ENCODE measurements at regions of chr13 and their contacts with region 1.

Region 1: GRCh38 chr13:48731957-48732569 is 78.3 kb downstream of the CYSLTR2 start:
- DNase-seq: peak; percentile 16
- H3K4me3 Mint-ChIP-seq: peak overlapping the region; percentile 63
- H3K27ac Mint-ChIP-seq: no peak overlapping the region
- H3K4me1 Mint-ChIP-seq: no peaks in the 10 kb centered on the region
- H3K27me3 Mint-ChIP-seq: peaks cover 3% of the 10 kb centered on the region

Region 2: DNA sequence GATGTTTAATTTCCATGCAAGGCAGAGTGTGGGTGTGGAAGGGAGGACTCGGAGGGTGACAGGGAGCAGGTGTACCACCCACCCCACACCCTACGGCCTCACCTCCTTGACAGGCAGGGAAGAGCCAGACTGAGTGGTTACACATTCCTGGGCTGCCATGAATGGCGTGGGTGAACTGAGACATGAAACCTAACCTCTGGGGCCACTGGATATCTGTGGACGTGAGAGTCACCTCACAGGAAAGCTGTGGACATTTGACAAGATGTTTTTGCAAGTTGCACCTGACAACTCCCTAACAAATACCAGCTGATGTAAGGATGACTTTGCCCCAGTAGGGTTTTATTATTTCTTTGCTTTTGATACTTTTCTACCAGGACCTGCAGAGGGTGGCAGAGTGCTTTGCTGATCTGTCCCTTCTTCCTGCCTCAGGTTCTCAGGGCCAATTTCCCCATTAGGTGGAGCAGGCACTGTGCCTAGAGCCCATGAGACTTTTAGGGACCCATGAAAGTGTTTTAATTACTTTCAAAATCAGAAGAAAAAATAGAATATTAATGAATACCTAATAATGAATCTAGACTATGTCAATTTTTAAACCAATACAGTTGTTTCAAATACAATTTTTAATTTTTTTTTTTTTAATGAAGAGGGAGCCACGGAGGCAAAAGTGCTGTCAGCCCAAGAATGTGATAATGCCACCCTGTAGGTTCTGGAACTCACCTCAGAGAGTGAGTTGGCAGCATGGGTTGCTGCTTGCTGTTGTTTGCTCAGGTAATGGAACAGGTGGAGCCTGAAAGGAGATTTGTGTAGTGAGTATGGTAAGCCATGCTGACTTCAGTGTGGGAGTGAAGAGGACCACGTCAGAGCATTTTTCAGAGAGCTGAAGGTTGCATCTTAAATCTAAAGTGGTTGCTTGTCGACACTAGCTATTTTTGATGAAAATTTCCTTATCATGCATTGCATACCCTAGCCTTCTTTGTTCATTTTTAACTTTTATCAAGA is 136.3 kb before region 1 on chr13:
- intact Hi-C with region 1: loop called (anchors 2 kb)
- DNase-seq: peak; percentile 12
- H3K4me3 Mint-ChIP-seq: no peak overlapping the region
- H3K27ac Mint-ChIP-seq: no peak overlapping the region
- H3K4me1 Mint-ChIP-seq: no peaks in the 10 kb centered on the region
- H3K27me3 Mint-ChIP-seq: peaks cover 13% of the 10 kb centered on the region

Region 3: GRCh38 chr13:49292742-49293486 is 560.9 kb after region 1 on chr13:
- intact Hi-C with region 1: no loop called
- DNase-seq: no peak
- H3K4me3 Mint-ChIP-seq: no peak overlapping the region
- H3K27ac Mint-ChIP-seq: no peak overlapping the region
- H3K4me1 Mint-ChIP-seq: no peaks in the 10 kb centered on the region
- H3K27me3 Mint-ChIP-seq: no peaks in the 10 kb centered on the region